Caco-2 (cell line): ENCODE measurements at regions of chr16 and their contacts with region 1.

Region 1: DNA sequence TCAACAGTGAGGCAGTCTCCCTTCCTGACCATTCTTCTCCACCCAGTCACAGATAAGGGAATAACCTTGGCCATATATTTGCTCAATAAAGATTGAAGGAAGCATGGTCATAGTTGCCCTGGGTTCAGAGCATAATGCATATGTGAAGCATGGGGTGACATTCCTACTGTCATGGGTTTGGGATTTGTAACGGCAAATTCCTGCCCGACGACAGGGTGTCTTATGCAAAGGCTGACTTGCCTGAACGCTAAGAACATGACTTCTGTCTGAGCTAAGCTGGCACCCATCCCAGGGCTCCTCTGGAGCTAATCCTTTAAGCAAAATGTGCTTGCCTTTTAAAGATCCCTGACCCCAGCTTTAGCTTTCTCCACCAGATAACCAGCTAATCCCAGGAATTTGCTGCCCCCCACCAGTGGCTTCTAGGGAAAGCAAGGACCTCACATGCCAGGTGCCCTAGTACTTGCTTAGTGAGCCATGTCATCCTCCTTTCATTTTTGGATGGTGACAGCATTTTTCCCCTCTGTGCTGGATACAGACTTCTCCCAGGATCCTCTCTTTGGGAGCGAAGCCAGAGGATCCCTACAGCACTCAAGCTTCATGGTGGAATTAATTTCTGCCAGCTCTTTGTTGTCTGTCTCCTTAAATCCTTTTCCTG is 11.7 kb downstream of the SLC7A6OS start:
- DNase-seq: peak in 1 of 2 experiments; percentile 42
- H3K4me3 ChIP-seq: no peak overlapping the region
- H3K4me3 Mint-ChIP-seq: peak overlapping the region; percentile 46
- H3K27ac Mint-ChIP-seq: peak overlapping the region; percentile 89
- H3K4me1 ChIP-seq: peaks cover 29% of the 10 kb centered on the region
- H3K4me1 Mint-ChIP-seq: peaks cover 55% of the 10 kb centered on the region
- H3K27me3 ChIP-seq: no peaks in the 10 kb centered on the region
- H3K27me3 Mint-ChIP-seq: no peaks in the 10 kb centered on the region
- CTCF ChIP-seq: no peak

Region 2: DNA sequence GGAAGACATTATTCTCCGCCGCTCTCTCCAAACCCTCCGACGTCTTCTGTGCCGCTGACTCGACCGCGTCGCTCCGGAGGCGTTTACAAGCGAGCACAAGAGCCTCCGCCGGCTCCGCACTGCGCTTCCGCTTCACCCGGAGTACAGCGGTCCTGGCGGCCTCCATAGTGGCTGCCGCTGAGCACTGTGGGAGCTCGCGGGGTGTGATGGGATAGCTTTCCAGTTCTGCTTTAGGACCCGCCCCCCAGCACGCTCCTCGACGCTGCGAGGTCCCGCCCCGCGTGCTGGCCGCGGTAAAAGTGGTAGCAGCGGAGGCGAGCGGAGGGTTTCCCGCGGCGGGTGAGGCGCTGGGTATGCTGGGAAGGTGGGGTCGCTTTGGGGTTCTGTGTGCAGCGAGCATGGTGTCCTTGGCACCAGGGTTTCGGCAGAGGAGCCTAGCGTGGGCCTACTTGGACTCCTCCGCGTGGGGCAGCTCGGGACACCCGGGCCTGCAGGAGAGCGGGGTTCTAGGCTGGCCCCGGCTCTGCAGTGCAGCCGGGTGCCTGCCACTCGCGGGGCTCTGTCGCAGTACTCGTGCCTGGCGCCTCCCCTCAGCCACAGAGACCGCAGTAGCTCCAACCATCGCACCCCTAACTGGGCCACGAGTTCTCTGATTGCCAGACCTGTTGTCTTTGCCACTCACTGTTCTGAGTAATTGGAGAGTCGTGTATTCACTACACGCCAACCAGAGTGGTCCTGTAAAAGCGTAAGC is 11.9 kb after region 1 on chr16 and contains the starts of genes PRMT7 and SLC7A6OS:
- CTCF ChIA-PET with region 1: interaction called, 3 read pairs
- POLR2A ChIA-PET with region 1: interaction called, 20 read pairs
- intact Hi-C with region 1: no loop called
- DNase-seq: peak; percentile 93 to 95
- H3K4me3 ChIP-seq: peak within 1 kb of the TSS; percentile 65
- H3K4me3 Mint-ChIP-seq: peak within 1 kb of the TSS; percentile 77
- H3K27ac Mint-ChIP-seq: peak within 1 kb of the TSS; percentile 89
- H3K4me1 ChIP-seq: peaks cover 35% of the 10 kb centered on the region
- H3K4me1 Mint-ChIP-seq: peaks cover 39% of the 10 kb centered on the region
- H3K27me3 ChIP-seq: no peaks in the 10 kb centered on the region
- H3K27me3 Mint-ChIP-seq: no peaks in the 10 kb centered on the region
- CTCF ChIP-seq: peak in 1 of 2 experiments; percentile 52
- total RNA-seq, gene PRMT7: 156 and 166 TPM in 2 replicates
- total RNA-seq, gene SLC7A6OS: 34.0 and 34.2 TPM in 2 replicates